ENCODE measurements at regions of chr10 and their contacts with region 1.

Region 1: DNA sequence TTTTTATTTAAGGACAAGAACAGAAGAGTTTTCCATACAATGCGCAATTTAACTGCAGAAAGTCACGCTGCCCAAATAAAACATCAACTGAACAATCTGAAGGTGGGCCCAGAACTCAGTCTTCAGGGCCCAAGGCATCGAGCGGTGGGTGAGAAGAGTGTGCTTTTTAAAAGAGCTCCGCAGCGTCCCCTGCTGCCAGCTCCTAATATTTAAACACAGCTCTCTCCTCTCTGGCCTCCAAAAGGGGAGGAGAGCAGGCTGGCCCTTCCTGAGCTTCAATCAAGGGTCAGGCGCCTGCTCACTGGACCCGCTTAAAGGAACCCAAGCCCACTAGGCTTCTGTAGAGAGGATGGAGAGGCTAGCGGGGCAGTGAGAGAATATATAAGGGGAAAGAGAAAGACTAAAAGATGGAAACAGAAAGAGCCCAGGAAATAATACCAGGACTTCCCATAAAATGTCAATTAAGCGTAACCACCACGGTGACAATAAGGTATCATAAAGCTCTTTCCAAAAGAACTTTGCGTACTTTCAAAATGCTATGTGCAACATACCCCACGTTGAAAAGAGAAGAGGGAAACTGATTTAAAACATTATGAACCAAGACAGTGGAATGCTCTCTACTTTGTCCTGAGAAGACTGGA is 2.8 kb downstream of the FAM53B start:
- DNase-seq: peak in 1 of 2 experiments; percentile 90
- H3K4me3 ChIP-seq: peak overlapping the region in 1 of 4 experiments; percentile 35; a peak in 1 of 8 replicates
- H3K27ac ChIP-seq: no peak overlapping the region
- H3K4me1 ChIP-seq: peaks cover 29 to 45% (median 32%) of the 10 kb centered on the region in 4 experiments
- H3K27me3 ChIP-seq: peaks cover 1 to 21% (median 14%) of the 10 kb centered on the region in 4 experiments; a peak in 6 of 7 replicates
- CTCF ChIP-seq: peak; percentile 53 to 82 (median 82)
- EP300 ChIP-seq: no peak
- POLR2A ChIP-seq: no peak
- RAD21 ChIP-seq: peak; percentile 72 to 79

Region 2: GRCh38 chr10:124545351-124546054 is 195.9 kb before region 1 on chr10:
- CTCF ChIA-PET with region 1: interaction called, 12 read pairs
- POLR2A ChIA-PET with region 1: no interaction called
- DNase-seq: no peak
- H3K4me3 ChIP-seq: no peak overlapping the region
- H3K27ac ChIP-seq: no peak overlapping the region
- H3K4me1 ChIP-seq: peaks cover 0 to 2% (median 0%) of the 10 kb centered on the region in 4 experiments; a peak in 2 of 7 replicates
- H3K27me3 ChIP-seq: no peaks in the 10 kb centered on the region
- CTCF ChIP-seq: no peak
- EP300 ChIP-seq: no peak
- POLR2A ChIP-seq: no peak
- RAD21 ChIP-seq: no peak

Region 3: DNA sequence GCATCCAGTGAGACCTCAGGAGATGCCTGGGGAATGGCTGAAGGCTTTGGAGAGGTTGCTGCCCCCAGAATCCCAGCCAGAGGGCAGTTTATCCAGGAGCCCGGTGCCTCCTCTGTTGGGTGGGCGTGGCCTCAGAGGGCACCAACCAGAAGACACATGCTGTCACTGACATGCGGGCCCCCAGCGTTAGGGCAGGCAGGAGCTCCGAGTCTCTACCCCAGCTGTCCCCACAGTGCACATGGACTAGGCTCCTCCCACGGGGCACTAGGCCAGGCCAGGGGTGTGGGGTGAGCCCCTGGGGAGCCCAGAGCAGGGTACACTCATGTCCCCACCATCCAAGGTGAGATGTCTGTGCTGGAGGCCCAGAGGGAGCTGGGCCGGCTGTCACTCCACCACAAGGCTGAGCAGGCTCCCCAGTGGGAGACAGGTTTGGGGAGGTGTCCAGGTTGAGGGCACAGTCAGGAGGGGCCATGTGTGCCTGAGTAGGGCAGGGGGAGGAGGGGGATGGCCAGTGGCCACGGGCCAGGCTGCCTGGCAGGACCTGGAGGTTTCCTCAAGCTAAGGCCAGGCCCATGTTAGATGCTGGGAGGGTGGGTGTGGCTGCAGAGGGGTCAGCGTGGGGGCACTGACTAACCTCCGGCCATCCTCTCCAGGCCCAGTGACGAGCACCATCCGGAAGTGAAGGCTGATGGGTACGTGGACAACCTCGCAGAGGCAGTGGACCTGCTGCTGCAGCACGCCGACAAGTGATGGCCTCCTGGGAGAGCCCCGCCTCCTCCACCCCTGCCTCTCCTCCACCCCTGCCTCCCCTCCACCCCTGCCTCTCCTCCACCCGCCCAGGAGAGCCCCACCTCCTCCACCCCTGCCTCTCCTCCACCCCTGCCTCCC is 128.5 kb before region 1 on chr10:
- CTCF ChIA-PET with region 1: interaction called, 10 read pairs
- POLR2A ChIA-PET with region 1: no interaction called
- DNase-seq: peak in 1 of 2 experiments; percentile 73
- H3K4me3 ChIP-seq: no peak overlapping the region
- H3K27ac ChIP-seq: no peak overlapping the region
- H3K4me1 ChIP-seq: peaks cover 0 to 8% (median 2%) of the 10 kb centered on the region in 4 experiments; a peak in 4 of 7 replicates
- H3K27me3 ChIP-seq: no peaks in the 10 kb centered on the region; a peak in 1 of 7 replicates
- CTCF ChIP-seq: peak; percentile 20 to 49 (median 34)
- EP300 ChIP-seq: no peak
- POLR2A ChIP-seq: no peak
- RAD21 ChIP-seq: peak; percentile 24 to 48; a peak in 2 of 4 replicates

Region 4: DNA sequence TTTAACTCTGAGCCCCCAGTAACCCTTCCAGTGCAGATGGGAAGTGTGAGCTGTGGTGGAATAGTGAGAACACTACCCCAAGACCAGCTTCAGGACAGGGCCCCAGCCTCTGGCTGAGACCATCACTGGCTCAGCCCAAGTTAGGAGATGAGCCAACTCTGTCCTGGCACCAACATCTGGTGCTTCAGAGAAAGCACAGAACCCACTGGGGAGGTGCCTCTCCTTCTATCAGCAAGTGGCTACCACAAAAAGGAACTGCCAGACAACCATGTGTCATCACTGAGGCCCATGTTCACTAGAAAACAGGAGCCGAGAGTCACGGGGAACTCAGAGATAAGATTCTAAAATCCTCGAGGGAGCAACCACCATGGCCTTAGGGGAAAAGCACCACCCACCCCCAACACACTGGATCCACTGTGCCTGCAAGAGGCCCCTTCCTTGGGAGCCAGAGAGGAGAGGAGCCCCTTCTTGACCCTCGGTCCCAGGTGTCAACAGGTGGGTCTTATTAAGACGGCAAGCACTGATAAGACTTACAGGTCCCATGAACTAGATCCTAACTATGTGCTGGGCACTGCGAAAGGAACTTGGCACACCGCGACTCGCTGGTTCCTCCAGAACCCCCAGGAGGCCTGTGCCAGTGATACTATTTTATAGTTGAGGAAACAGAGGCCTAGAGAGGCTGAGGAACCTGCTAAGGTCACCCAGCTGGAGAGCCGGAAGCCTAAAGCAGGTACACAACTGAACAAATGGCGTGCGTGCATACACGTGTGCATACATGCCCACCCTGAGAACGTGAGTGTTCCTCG is 99.9 kb before region 1 on chr10:
- CTCF ChIA-PET with region 1: interaction called, 37 read pairs
- POLR2A ChIA-PET with region 1: interaction called, 3 read pairs
- DNase-seq: no peak
- H3K4me3 ChIP-seq: no peak overlapping the region
- H3K27ac ChIP-seq: no peak overlapping the region
- H3K4me1 ChIP-seq: peaks cover 0 to 4% (median 0%) of the 10 kb centered on the region in 4 experiments; a peak in 2 of 7 replicates
- H3K27me3 ChIP-seq: no peaks in the 10 kb centered on the region
- CTCF ChIP-seq: no peak
- EP300 ChIP-seq: no peak
- POLR2A ChIP-seq: no peak
- RAD21 ChIP-seq: no peak

Region 5: GRCh38 chr10:124708922-124709520 is 32.4 kb before region 1 on chr10:
- CTCF ChIA-PET with region 1: interaction called, 35 read pairs
- POLR2A ChIA-PET with region 1: no interaction called
- DNase-seq: no peak
- H3K4me3 ChIP-seq: no peak overlapping the region
- H3K27ac ChIP-seq: no peak overlapping the region
- H3K4me1 ChIP-seq: peaks cover 3 to 21% (median 13%) of the 10 kb centered on the region in 4 experiments; a peak in 6 of 7 replicates
- H3K27me3 ChIP-seq: no peaks in the 10 kb centered on the region
- CTCF ChIP-seq: no peak
- EP300 ChIP-seq: no peak
- POLR2A ChIP-seq: no peak
- RAD21 ChIP-seq: no peak

Region 6: GRCh38 chr10:124875596-124875995 is 134.2 kb after region 1 on chr10:
- CTCF ChIA-PET with region 1: no interaction called
- POLR2A ChIA-PET with region 1: no interaction called
- DNase-seq: no peak
- H3K4me3 ChIP-seq: no peak overlapping the region
- H3K27ac ChIP-seq: no peak overlapping the region
- H3K4me1 ChIP-seq: no peaks in the 10 kb centered on the region
- H3K27me3 ChIP-seq: no peaks in the 10 kb centered on the region
- CTCF ChIP-seq: no peak
- EP300 ChIP-seq: no peak
- POLR2A ChIP-seq: no peak
- RAD21 ChIP-seq: no peak

Measured in H1 (cell line).